Panc1 (cell line): ENCODE measurements at regions of chr18 and their contacts with region 1.

Region 1: DNA sequence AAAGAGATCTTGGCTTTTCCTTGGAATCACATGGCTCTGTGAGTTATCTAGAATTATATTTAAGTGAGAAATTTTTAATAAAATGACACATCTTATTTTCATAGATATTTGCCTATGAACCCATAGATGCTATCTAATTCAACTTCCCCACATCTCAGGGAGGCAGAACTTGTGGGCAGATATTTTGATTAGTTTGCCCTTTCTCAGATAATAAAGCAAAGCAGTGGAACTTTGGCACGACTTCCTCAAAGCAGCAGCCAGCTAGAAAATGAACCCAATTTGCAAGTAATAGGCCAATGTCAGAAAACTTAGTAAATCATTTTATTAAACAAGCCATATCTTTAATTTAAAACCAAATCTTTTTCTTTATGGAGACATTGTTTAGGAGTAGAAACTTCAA is 32.7 kb downstream of the RAB27B start:
- DNase-seq: no peak
- ATAC-seq: no peak
- H3K4me3 ChIP-seq: no peak overlapping the region
- H3K27ac ChIP-seq: no peak overlapping the region
- H3K4me1 ChIP-seq: no peaks in the 10 kb centered on the region
- H3K27me3 ChIP-seq: no peaks in the 10 kb centered on the region
- CTCF ChIP-seq: no peak

Region 2: DNA sequence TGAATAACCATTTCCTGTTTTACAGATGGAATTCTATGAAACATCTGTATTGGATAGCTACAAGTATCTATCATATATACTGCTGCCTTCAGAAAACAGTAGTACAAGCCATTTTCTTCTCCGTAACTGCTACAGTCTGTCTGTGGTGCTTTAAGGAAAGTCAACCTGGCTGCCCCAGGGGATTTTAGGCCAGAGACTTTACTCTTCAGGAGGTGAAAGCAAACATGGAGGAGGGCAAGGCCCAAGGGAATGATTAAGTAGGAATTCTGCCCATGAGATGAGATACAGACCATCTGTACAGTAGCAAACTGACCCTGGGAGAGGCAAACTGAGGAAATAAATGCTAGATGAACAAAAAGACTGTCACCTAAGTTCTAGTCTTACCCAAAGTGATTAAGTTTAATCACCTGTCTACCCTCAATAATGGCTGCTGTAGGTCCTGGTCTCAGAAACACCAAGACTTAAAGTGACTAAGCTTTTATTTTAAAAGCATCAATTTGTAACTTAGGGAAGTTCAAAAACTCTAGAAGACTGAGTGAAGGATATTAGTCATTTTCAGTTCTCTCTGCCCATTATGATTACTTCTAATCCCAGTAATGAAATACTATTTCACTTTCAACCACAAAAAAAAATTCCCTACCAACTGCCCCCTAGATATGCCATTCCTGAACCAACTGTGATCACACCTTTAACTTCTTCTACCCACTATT is 651.3 kb before region 1 on chr18:
- CTCF ChIA-PET with region 1: no interaction called
- POLR2A ChIA-PET with region 1: interaction called, 16 read pairs
- in situ Hi-C with region 1: no loop called
- intact Hi-C with region 1: no loop called
- DNase-seq: no peak
- ATAC-seq: no peak
- H3K4me3 ChIP-seq: no peak overlapping the region
- H3K27ac ChIP-seq: no peak overlapping the region
- H3K4me1 ChIP-seq: no peaks in the 10 kb centered on the region
- H3K27me3 ChIP-seq: no peaks in the 10 kb centered on the region
- CTCF ChIP-seq: no peak

Region 3: DNA sequence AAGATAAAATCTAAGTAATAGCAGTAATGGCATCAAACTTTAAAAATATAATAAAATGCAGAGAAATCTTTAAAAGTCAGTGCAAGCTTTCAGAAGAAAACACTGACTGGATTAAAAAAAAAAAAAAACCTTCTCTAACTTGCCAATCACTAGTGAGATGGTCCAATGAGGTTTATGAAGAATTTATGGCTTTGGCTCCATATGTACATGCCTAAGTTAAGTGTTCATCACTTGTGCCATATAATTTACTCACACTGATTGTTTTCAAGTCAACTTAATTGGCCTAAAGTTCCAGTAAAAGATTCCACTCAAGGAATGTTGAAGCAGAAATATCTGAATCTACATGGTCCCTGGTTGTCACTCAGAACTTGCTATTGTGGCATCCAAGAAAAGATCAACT is 73.3 kb before region 1 on chr18:
- CTCF ChIA-PET with region 1: no interaction called
- POLR2A ChIA-PET with region 1: no interaction called
- in situ Hi-C with region 1: no loop called
- intact Hi-C with region 1: no loop called
- DNase-seq: no peak
- ATAC-seq: no peak
- H3K4me3 ChIP-seq: no peak overlapping the region
- H3K27ac ChIP-seq: no peak overlapping the region
- H3K4me1 ChIP-seq: no peaks in the 10 kb centered on the region
- H3K27me3 ChIP-seq: no peaks in the 10 kb centered on the region
- CTCF ChIP-seq: no peak